Uterus (tissue), 4 donors: ENCODE measurements at regions of chr13 and their contacts with region 1.

Region 1: GRCh38 chr13:71460211-71460610 is 406.8 kb downstream of the DACH1 start:
- DNase-seq: no peak
- H3K4me3 ChIP-seq: no peak overlapping the region
- H3K27ac ChIP-seq: no peak overlapping the region
- H3K4me1 ChIP-seq: no peaks in the 10 kb centered on the region
- H3K27me3 ChIP-seq: no peaks in the 10 kb centered on the region
- CTCF ChIP-seq: no peak
- POLR2A ChIP-seq: no peak

Region 2: GRCh38 chr13:71252184-71252704 is 208.0 kb before region 1 on chr13:
- intact Hi-C with region 1: no loop called
- DNase-seq: no peak
- H3K4me3 ChIP-seq: no peak overlapping the region
- H3K27ac ChIP-seq: no peak overlapping the region
- H3K4me1 ChIP-seq: no peaks in the 10 kb centered on the region
- H3K27me3 ChIP-seq: no peaks in the 10 kb centered on the region
- CTCF ChIP-seq: no peak
- POLR2A ChIP-seq: no peak

Region 3: DNA sequence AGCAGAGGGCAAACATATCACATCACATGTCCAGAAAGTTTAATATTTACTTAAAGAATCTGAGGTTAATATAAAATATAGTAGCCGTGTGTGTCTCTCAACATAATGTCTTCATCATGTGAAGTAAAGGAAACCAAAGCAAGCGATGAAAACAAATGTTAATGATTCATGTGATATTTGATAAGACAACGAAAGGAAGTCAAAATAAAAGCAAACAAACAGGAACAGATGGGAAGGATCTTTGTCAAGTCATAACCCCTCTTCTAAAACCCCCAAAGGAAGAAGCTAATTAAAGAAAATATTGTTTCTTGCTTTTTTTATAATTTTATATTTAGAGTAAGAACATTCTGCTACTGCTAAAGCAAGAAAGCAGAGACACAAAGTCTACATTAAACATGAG is 12.0 kb before region 1 on chr13:
- intact Hi-C with region 1: loop called (anchors 1 kb)
- DNase-seq: no peak
- H3K4me3 ChIP-seq: no peak overlapping the region
- H3K27ac ChIP-seq: no peak overlapping the region
- H3K4me1 ChIP-seq: no peaks in the 10 kb centered on the region
- H3K27me3 ChIP-seq: no peaks in the 10 kb centered on the region
- CTCF ChIP-seq: no peak
- POLR2A ChIP-seq: no peak